H1 (cell line): ENCODE measurements at regions of chr3 and their contacts with region 1.

Region 1: DNA sequence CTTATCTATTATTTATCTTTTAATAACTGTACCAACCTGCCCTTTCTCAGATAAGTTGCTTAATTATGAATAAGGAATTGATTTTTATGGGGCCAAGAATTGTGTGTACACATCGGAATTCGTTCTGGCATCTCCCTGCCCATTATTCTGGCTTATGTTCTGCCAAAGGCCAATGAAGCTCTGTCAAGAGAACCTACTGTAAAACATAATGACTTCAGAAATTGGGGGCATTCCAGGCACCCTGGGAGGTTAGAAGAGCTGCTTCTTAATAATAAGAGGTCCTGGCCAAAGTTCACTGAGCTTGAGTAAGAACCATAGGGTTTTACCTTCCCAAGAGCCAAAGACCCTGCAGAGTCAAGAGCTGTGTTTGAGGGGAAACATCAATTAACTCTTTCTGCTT is 261.7 kb downstream of the SLC9A9 start:
- DNase-seq: no peak
- H3K4me3 ChIP-seq: no peak overlapping the region
- H3K27ac ChIP-seq: no peak overlapping the region
- H3K4me1 ChIP-seq: no peaks in the 10 kb centered on the region
- H3K27me3 ChIP-seq: no peaks in the 10 kb centered on the region
- CTCF ChIP-seq: no peak
- EP300 ChIP-seq: no peak
- POLR2A ChIP-seq: no peak
- RAD21 ChIP-seq: no peak

Region 2: DNA sequence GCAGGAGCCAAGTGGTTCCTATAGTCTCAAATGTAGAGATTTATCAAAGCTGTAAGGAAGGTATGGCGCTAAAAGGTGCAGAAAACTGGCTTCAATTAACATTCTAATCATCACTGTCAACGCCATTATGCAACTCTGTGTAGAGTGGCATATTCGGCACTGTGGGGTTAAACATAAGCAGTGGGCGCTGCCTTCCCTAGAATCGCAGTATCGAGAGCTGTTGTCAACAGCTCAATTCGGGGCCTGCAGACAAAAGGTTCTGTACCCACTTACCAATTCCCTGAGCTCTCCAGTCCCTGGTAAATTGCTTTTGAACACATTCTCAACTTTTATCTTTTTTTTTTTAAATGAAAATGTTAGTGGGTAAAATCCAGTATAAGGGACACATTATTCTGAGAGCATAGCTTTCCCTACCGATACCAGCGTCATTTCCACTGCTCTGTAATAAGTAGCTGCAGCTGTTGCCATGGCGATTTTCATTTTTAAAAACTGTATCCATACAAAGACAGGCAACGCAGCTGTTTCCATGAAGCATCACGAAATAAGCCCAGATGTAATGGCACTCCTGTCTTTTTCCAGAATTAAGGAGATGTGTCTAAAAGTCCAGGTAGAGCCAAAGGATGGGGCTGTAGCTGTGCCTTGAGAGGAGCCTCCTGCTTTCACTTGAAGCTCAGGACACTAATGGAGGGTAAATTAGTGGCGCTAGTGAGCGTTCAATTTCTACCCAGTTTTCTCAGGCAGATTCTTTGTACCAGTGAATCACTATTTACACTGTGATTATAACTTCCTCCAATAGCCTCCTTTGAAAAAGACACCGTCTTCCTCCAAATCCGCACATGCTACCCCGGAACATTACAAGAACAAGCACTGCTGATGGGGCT is 11.4 kb after region 1 on chr3:
- CTCF ChIA-PET with region 1: interaction called, 10 read pairs
- POLR2A ChIA-PET with region 1: no interaction called
- DNase-seq: no peak
- H3K4me3 ChIP-seq: no peak overlapping the region
- H3K27ac ChIP-seq: no peak overlapping the region
- H3K4me1 ChIP-seq: peaks cover 5 to 20% (median 14%) of the 10 kb centered on the region in 4 experiments
- H3K27me3 ChIP-seq: no peaks in the 10 kb centered on the region
- CTCF ChIP-seq: no peak
- EP300 ChIP-seq: no peak
- POLR2A ChIP-seq: no peak
- RAD21 ChIP-seq: no peak